Activated naive CD4-positive, alpha-beta T cell treated with anti-CD3 and anti-CD28 coated beads for 36 hours (primary cell): ENCODE measurements at regions of chr6 and their contacts with region 1.

Region 1: GRCh38 chr6:95203153-95203754 is 374.1 kb upstream of the MANEA start:
- DNase-seq: peak; percentile 51
- H3K4me3 Mint-ChIP-seq: no peak overlapping the region
- H3K27ac Mint-ChIP-seq: no peak overlapping the region
- H3K4me1 Mint-ChIP-seq: no peaks in the 10 kb centered on the region
- H3K27me3 Mint-ChIP-seq: no peaks in the 10 kb centered on the region

Region 2: DNA sequence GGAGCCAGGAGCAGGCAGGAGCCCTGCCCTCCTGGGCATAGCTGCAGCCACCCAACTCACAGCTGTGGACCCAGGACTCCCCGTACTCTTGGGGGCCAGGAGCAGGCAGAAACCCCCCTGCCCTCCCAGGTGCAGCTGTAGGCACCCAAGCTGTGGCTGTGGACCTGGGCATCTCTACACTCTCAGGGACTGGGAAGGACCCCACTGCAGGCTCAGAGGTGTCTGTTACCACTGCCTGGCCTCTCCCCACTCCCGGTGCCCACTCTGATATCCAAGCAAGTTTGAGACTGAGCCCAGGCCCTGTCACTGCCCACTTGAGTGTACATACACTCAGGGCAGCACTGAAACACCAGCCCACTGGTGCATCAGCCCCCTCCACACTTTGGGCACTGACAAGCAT is 180.6 kb after region 1 on chr6:
- CTCF ChIA-PET with region 1: no interaction called
- intact Hi-C with region 1: no loop called
- DNase-seq: no peak
- H3K4me3 Mint-ChIP-seq: no peak overlapping the region
- H3K27ac Mint-ChIP-seq: no peak overlapping the region
- H3K4me1 Mint-ChIP-seq: no peaks in the 10 kb centered on the region
- H3K27me3 Mint-ChIP-seq: no peaks in the 10 kb centered on the region

Region 3: GRCh38 chr6:95923518-95923917 is 720.3 kb after region 1 on chr6:
- CTCF ChIA-PET with region 1: no interaction called
- intact Hi-C with region 1: loop called (anchors 5 kb)
- DNase-seq: peak; percentile 9
- H3K4me3 Mint-ChIP-seq: no peak overlapping the region
- H3K27ac Mint-ChIP-seq: no peak overlapping the region
- H3K4me1 Mint-ChIP-seq: no peaks in the 10 kb centered on the region
- H3K27me3 Mint-ChIP-seq: no peaks in the 10 kb centered on the region